ENCODE measurements at regions of chr17 and their contacts with region 1.

Region 1: GRCh38 chr17:73566905-73567782 is 77.1 kb downstream of the SDK2 start:
- DNase-seq: no peak
- ATAC-seq: peak; percentile 9
- H3K4me3 ChIP-seq: no peak overlapping the region
- H3K27ac ChIP-seq: no peak overlapping the region
- H3K4me1 ChIP-seq: no peaks in the 10 kb centered on the region
- H3K27me3 ChIP-seq: no peaks in the 10 kb centered on the region

Region 2: GRCh38 chr17:73625991-73626673 is 59.0 kb after region 1 on chr17:
- intact Hi-C with region 1: loop called in 1 of 2 experiments (anchors 10 kb)
- DNase-seq: peak in 1 of 2 donors; percentile 53
- ATAC-seq: no peak
- H3K4me3 ChIP-seq: no peak overlapping the region
- H3K27ac ChIP-seq: no peak overlapping the region
- H3K4me1 ChIP-seq: no peaks in the 10 kb centered on the region
- H3K27me3 ChIP-seq: no peaks in the 10 kb centered on the region

Measured in aorta (tissue), 5 donors.